Transverse colon (tissue), 4 donors: ENCODE measurements at regions of chr10 and their contacts with region 1.

Region 1: GRCh38 chr10:80464557-80465450 is 10.7 kb downstream of the TSPAN14 start:
- DNase-seq: no peak
- H3K4me3 ChIP-seq: peak overlapping the region in 1 of 4 donors; percentile 19
- H3K27ac ChIP-seq: peak overlapping the region; percentile 84 to 100 (median 85)
- H3K4me1 ChIP-seq: peaks cover 74 to 100% (median 91%) of the 10 kb centered on the region in 4 donors
- H3K27me3 ChIP-seq: no peaks in the 10 kb centered on the region
- CTCF ChIP-seq: no peak
- EP300 ChIP-seq: no peak
- POLR2A ChIP-seq: no peak

Region 2: DNA sequence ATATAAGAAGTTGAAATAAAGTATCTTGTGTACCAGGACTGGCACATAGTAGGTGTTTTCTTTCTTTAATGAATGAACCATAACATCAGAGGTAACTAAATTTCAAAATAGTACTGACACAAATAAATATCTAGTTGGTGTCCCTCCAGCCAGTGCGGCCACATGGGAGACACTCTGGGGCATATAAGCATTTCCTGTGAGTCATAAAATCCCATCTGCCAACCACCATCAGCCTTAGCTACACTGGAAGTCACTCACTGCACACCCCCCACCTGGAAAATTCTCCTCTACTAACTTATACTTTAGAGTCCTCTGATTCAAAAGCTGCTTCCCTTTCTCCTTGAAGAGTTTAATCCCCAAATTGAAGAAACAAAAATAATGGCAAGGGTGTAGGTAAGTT is 140.7 kb before region 1 on chr10:
- in situ Hi-C with region 1: no loop called
- intact Hi-C with region 1: no loop called
- DNase-seq: no peak
- H3K4me3 ChIP-seq: no peak overlapping the region
- H3K27ac ChIP-seq: no peak overlapping the region
- H3K4me1 ChIP-seq: no peaks in the 10 kb centered on the region
- H3K27me3 ChIP-seq: no peaks in the 10 kb centered on the region
- CTCF ChIP-seq: no peak
- EP300 ChIP-seq: no peak
- POLR2A ChIP-seq: no peak

Region 3: DNA sequence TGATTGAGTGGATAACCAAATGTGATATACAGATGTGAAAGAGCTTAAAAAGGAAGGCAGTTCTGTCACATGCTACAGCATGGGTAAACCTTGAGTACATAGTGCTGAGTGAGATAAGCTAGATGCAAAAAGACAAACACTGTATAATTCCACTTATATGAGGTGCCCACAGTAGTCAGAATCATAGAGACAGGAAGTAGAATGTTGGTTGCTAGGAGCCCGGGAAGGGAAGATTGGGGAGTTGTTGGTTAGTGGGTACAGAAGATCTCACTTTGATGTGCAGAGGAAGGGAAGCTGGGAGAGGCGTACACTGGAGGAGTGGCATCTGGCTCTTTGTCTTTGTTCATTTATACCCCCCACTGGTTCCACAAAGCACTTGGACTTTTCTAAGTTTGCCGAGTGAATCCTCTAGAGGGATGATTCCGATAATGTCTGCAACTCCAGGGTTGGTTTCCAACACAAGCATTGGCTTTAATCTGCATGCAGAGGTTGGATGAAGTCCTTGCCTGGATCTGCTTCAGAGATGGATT is 28.8 kb after region 1 on chr10:
- in situ Hi-C with region 1: no loop called
- intact Hi-C with region 1: loop called (anchors 2 kb)
- DNase-seq: no peak
- H3K4me3 ChIP-seq: no peak overlapping the region
- H3K27ac ChIP-seq: peak overlapping the region; percentile 6 to 58 (median 51)
- H3K4me1 ChIP-seq: peaks cover 22 to 79% (median 33%) of the 10 kb centered on the region in 4 donors
- H3K27me3 ChIP-seq: no peaks in the 10 kb centered on the region
- CTCF ChIP-seq: no peak
- EP300 ChIP-seq: no peak
- POLR2A ChIP-seq: no peak